ENCODE measurements at regions of chr17 and their contacts with region 1.

Region 1: DNA sequence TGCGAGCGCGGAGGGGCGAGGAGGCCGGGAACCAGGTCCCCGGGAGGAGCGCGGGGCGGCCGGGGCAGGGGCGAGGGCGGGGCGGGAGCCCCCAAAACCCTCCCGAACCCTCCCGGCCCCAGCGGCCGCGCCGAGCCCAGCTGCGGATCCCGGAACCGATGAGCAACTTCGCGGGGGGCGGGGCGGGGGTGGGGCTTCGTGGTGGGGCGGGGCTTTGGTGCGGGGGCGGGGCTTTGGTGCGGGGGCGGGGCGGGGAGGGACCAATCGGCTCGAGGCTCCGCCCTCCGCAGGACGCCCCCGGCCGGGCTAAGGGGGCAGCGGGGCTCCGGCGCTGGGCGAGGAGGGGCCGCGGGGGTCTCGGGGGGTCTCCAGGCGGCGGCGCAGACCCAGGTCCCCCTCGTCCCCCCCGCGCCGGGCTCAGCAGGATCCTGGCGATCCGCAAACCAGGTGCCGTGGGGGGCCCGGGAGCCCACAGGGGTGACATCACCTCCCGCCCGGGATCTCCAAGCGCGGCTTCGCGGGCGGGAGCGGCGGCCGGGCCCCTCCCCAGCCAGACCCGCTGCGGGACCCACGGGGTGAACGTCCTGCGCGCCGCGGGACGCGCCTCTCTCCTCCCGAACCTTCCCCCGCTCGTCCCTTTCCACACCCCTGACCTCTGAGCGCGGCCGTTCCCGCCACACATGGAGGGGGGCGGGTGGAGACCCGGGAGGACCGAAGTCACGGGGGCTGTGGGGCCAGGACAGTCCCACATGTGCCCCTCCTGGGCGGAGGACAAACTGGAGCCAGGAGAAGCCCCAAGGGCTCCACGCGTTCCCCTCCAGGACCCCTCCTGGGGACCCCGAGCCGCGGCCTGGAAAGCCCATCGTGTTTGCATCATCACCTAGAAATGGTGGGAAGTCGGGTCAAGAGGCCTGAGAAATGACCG is at the start of gene ABR:
- DNase-seq: no peak
- ATAC-seq: peak; percentile 5
- H3K4me3 ChIP-seq: peak within 1 kb of the TSS; percentile 85
- H3K27ac ChIP-seq: peak within 1 kb of the TSS; percentile 89
- H3K4me1 ChIP-seq: peaks cover 57% of the 10 kb centered on the region
- H3K27me3 ChIP-seq: no peaks in the 10 kb centered on the region
- CTCF ChIP-seq: no peak
- EP300 ChIP-seq: no peak
- POLR2A ChIP-seq: peak; percentile 61
- RAD21 ChIP-seq: no peak
- polyA plus RNA-seq, gene ABR: 1.4 to 2.5 TPM

Region 2: GRCh38 chr17:1019451-1019850 is 160.6 kb before region 1 on chr17:
- CTCF ChIA-PET with region 1: no interaction called
- POLR2A ChIA-PET with region 1: no interaction called
- RAD21 ChIA-PET with region 1: no interaction called
- SMC1A ChIA-PET with region 1: no interaction called
- in situ Hi-C with region 1: no loop called
- intact Hi-C with region 1: no loop called
- DNase-seq: no peak
- ATAC-seq: no peak
- H3K4me3 ChIP-seq: no peak overlapping the region
- H3K27ac ChIP-seq: no peak overlapping the region
- H3K4me1 ChIP-seq: no peaks in the 10 kb centered on the region
- H3K27me3 ChIP-seq: no peaks in the 10 kb centered on the region
- CTCF ChIP-seq: no peak
- EP300 ChIP-seq: no peak
- POLR2A ChIP-seq: no peak
- RAD21 ChIP-seq: no peak

Region 3: GRCh38 chr17:1164935-1165556 is 15.0 kb before region 1 on chr17:
- CTCF ChIA-PET with region 1: interaction called, 7 read pairs
- POLR2A ChIA-PET with region 1: interaction called, 3 read pairs
- RAD21 ChIA-PET with region 1: interaction called, 14 read pairs
- SMC1A ChIA-PET with region 1: interaction called, 9 read pairs
- in situ Hi-C with region 1: no loop called
- intact Hi-C with region 1: no loop called
- DNase-seq: no peak
- ATAC-seq: peak; percentile 82
- H3K4me3 ChIP-seq: no peak overlapping the region; the same call in 1 of the 2 replicates
- H3K27ac ChIP-seq: peak overlapping the region; percentile 31; the same call in 1 of the 2 replicates
- H3K4me1 ChIP-seq: peaks cover 8% of the 10 kb centered on the region
- H3K27me3 ChIP-seq: no peaks in the 10 kb centered on the region
- CTCF ChIP-seq: peak; percentile 16 to 21 (median 20); a peak in 2 of 6 replicates
- EP300 ChIP-seq: no peak
- POLR2A ChIP-seq: no peak
- RAD21 ChIP-seq: no peak

Region 4: GRCh38 chr17:1197781-1198490 is 17.9 kb after region 1 on chr17:
- CTCF ChIA-PET with region 1: interaction called, 138 read pairs
- POLR2A ChIA-PET with region 1: interaction called, 21 read pairs
- RAD21 ChIA-PET with region 1: interaction called, 44 read pairs
- SMC1A ChIA-PET with region 1: interaction called, 40 read pairs
- in situ Hi-C with region 1: no loop called
- intact Hi-C with region 1: no loop called
- DNase-seq: peak; percentile 97
- ATAC-seq: peak; percentile 88
- H3K4me3 ChIP-seq: peak overlapping the region; percentile 29; the same call in 1 of the 2 replicates
- H3K27ac ChIP-seq: peak overlapping the region; percentile 89
- H3K4me1 ChIP-seq: peaks cover 56% of the 10 kb centered on the region
- H3K27me3 ChIP-seq: no peaks in the 10 kb centered on the region
- CTCF ChIP-seq: no peak
- EP300 ChIP-seq: peak; percentile 64 to 81; a peak in 3 of 4 replicates
- POLR2A ChIP-seq: peak; percentile 57; the same call in 1 of the 2 replicates
- RAD21 ChIP-seq: 0 out of 2 replicates have a peak, but pooled peaks have one; percentile 11

Region 5: GRCh38 chr17:1203111-1203966 is 23.3 kb after region 1 on chr17:
- CTCF ChIA-PET with region 1: interaction called, 138 read pairs
- POLR2A ChIA-PET with region 1: interaction called, 21 read pairs
- RAD21 ChIA-PET with region 1: interaction called, 44 read pairs
- SMC1A ChIA-PET with region 1: interaction called, 40 read pairs
- in situ Hi-C with region 1: no loop called
- intact Hi-C with region 1: no loop called
- DNase-seq: no peak
- ATAC-seq: 0 out of 3 replicates have a peak, but pooled peaks have one; percentile 6
- H3K4me3 ChIP-seq: no peak overlapping the region
- H3K27ac ChIP-seq: no peak overlapping the region
- H3K4me1 ChIP-seq: peaks cover 61% of the 10 kb centered on the region
- H3K27me3 ChIP-seq: no peaks in the 10 kb centered on the region
- CTCF ChIP-seq: no peak
- EP300 ChIP-seq: no peak
- POLR2A ChIP-seq: no peak
- RAD21 ChIP-seq: no peak